ENCODE measurements at regions of chr20 and their contacts with region 1.

Region 1: DNA sequence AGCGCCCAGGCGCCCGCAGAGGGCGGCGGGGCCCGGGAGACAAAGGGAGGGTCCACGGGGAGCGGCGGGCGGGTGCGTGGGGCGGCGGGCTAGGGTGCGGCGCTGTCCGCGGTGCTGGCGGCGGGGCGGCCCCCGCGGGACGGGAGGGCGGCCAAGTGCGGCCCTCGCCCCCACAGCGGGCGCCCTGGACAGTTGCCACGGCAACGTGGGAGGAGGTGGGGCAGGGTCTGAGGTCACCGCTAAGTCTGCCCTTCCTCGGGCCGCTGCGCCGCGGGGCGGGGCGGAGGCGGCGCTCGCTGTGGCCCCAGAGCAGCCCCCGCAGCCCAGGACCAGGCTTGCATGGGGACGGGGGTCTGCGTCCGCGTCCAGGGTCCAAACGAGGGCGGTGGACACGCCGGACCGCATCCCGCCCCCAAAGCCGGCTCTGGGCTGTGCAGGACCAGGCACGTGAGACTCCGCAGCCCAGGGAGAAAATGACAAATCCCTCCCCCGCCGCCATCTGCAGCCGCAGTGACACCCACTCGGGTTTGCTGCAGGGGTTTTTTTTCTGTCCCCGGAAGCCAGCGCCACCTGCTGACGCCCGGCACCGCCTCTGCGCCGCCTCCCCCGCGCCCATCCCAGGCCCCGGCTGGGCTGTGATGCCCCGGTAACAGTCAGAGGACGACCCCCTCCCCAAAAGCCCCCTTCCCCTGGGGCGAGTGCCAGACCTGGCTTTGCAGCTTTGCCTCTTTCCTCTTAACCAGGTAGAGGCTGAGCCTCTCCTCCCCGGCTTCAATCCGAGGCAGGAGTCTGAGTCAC is 36.8 kb downstream of the YTHDF1 start:
- DNase-seq: peak; percentile 48 to 71 (median 67)
- ATAC-seq: peak; percentile 80
- H3K4me3 ChIP-seq: peak overlapping the region; percentile 33
- H3K4me3 Mint-ChIP-seq: peak overlapping the region in 8 of 10 donors; percentile 23 to 78 (median 66)
- H3K27ac ChIP-seq: no peak overlapping the region
- H3K27ac Mint-ChIP-seq: peak overlapping the region in 2 of 9 donors; percentile 14 to 76
- H3K4me1 ChIP-seq: peaks cover 0 to 6% of the 10 kb centered on the region in 2 donors
- H3K4me1 Mint-ChIP-seq: peaks cover 0 to 17% (median 8%) of the 10 kb centered on the region in 7 donors
- H3K27me3 ChIP-seq: peaks cover 3 to 16% of the 10 kb centered on the region in 2 donors
- H3K27me3 Mint-ChIP-seq: peaks cover 10 to 50% (median 33%) of the 10 kb centered on the region in 5 donors

Region 2: GRCh38 chr20:63027922-63028389 is 151.1 kb before region 1 on chr20:
- CTCF ChIA-PET with region 1: no interaction called
- POLR2A ChIA-PET with region 1: no interaction called
- intact Hi-C with region 1: no loop called
- DNase-seq: peak in 2 of 9 donors; percentile 37 to 41
- ATAC-seq: no peak
- H3K4me3 ChIP-seq: no peak overlapping the region
- H3K4me3 Mint-ChIP-seq: peak overlapping the region in 7 of 10 donors; percentile 19 to 80 (median 54)
- H3K27ac ChIP-seq: no peak overlapping the region
- H3K27ac Mint-ChIP-seq: peak overlapping the region in 4 of 9 donors; percentile 59 to 69 (median 67)
- H3K4me1 ChIP-seq: peaks cover 0 to 3% of the 10 kb centered on the region in 2 donors
- H3K4me1 Mint-ChIP-seq: peaks cover 4 to 29% (median 6%) of the 10 kb centered on the region in 7 donors
- H3K27me3 ChIP-seq: peaks cover 0 to 3% of the 10 kb centered on the region in 2 donors
- H3K27me3 Mint-ChIP-seq: peaks cover 4 to 31% (median 6%) of the 10 kb centered on the region in 5 donors

Region 3: GRCh38 chr20:63056236-63056948 is 122.7 kb before region 1 on chr20:
- CTCF ChIA-PET with region 1: interaction called, 15 read pairs
- POLR2A ChIA-PET with region 1: no interaction called
- intact Hi-C with region 1: loop called in 1 of 2 experiments (anchors 1 kb)
- DNase-seq: peak in 8 of 9 donors; percentile 16 to 64 (median 37)
- ATAC-seq: peak; percentile 78
- H3K4me3 ChIP-seq: no peak overlapping the region
- H3K4me3 Mint-ChIP-seq: no peak overlapping the region
- H3K27ac ChIP-seq: no peak overlapping the region
- H3K27ac Mint-ChIP-seq: no peak overlapping the region
- H3K4me1 ChIP-seq: no peaks in the 10 kb centered on the region
- H3K4me1 Mint-ChIP-seq: peaks cover 0 to 3% (median 0%) of the 10 kb centered on the region in 7 donors
- H3K27me3 ChIP-seq: peaks cover 0 to 3% of the 10 kb centered on the region in 2 donors
- H3K27me3 Mint-ChIP-seq: peaks cover 0 to 18% (median 11%) of the 10 kb centered on the region in 5 donors

Region 4: DNA sequence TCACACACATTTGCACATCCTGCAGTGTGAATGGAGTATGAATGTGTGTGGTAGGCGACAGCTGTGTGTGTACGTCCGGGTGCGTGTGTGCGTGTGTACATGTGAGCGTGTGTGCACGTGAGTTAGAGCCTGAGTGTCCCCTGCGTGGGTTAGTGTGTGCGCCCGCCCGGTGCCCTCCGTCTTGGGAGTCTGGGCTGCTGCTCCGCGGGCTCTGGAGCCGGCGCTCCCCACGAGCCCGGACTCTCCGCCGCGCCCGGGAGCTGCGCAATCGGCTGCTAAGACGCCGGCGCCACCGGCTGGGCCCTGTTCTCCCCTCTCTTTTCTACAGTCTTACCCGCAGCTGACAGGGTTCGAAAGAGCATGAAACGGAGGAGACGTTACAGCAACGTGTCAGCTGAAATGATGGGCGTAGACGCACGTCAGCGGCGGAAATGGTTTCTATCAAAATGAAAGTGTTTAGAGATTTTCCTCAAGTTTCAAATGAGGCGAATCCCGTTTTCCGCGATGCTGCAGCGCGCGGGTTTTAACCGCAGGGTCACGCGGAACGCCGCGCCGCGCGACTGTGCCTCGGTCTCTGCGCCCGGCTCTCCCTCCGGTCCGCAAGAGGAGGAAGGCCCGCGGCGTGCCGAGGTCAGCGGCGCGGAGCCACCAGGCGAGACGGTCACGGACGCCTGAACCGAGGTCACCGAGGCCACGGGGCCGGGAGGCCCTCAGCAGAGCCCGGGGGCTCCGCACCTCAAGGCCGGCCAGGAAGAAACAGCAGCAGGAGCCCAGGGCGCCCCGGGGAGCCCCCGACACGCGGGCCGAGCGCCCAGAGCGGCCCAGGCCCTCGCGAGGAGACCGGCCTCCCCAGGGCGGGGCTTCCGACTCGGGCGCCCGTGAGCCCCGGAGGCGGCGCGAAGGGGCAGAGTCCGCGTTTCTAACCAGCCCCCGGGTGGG is 77.0 kb before region 1 on chr20:
- CTCF ChIA-PET with region 1: no interaction called
- POLR2A ChIA-PET with region 1: no interaction called
- intact Hi-C with region 1: loop called in 1 of 2 experiments (anchors 2 kb)
- DNase-seq: peak; percentile 53 to 84 (median 80)
- ATAC-seq: peak; percentile 76
- H3K4me3 ChIP-seq: peak overlapping the region; percentile 84
- H3K4me3 Mint-ChIP-seq: peak overlapping the region; percentile 86 to 95 (median 92)
- H3K27ac ChIP-seq: peak overlapping the region; percentile 88
- H3K27ac Mint-ChIP-seq: peak overlapping the region; percentile 90 to 99 (median 96)
- H3K4me1 ChIP-seq: no peaks in the 10 kb centered on the region
- H3K4me1 Mint-ChIP-seq: peaks cover 0 to 8% (median 5%) of the 10 kb centered on the region in 7 donors
- H3K27me3 ChIP-seq: no peaks in the 10 kb centered on the region
- H3K27me3 Mint-ChIP-seq: no peaks in the 10 kb centered on the region

Measured in naive thymus-derived CD4-positive, alpha-beta T cell (primary cell).